HEK293T (cell line): ENCODE measurements at regions of chr7 and their contacts with region 1.

Region 1: GRCh38 chr7:129163875-129164544 is 19.5 kb downstream of the TSPAN33 start:
- DNase-seq: peak; percentile 47

Region 2: GRCh38 chr7:129066290-129067131 is 97.5 kb before region 1 on chr7:
- CTCF ChIA-PET with region 1: no interaction called
- POLR2A ChIA-PET with region 1: no interaction called
- DNase-seq: peak; percentile 27

Region 3: DNA sequence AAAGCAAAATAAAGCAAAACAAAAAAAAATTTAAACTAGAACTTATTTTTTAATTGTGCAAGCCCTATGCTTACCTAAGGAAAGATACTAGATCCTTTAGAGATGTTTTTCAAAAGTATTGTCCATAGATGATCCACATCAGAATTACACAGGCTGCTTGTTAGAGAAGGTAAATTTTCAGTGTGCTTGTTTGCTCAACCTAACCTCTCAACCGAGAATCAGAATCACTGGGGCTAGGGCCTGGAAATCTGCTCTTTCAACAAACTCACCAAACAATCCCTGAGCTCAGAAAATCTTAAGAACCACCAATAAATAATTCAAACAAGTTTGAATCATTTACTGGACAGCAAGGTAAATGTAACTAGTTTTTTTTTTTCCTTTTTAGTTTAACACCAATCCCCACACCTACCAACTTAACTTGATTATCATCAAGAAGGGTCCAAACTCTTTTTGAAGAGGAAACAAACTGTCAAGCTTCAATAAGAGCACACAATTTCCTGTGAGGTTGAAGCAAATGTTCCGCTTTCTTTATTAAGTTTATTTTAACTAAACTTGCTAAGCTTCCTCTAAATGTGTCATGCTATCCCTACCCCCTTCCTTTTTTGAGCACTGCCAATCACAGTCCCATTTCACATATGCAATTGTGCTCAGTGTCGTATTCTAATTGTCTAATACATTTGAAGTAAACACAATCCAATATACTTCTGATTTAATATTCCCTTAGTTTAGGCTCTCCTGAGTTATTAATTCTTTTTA is 26.9 kb before region 1 on chr7:
- CTCF ChIA-PET with region 1: interaction called, 10 read pairs
- POLR2A ChIA-PET with region 1: no interaction called
- DNase-seq: no peak

Region 4: DNA sequence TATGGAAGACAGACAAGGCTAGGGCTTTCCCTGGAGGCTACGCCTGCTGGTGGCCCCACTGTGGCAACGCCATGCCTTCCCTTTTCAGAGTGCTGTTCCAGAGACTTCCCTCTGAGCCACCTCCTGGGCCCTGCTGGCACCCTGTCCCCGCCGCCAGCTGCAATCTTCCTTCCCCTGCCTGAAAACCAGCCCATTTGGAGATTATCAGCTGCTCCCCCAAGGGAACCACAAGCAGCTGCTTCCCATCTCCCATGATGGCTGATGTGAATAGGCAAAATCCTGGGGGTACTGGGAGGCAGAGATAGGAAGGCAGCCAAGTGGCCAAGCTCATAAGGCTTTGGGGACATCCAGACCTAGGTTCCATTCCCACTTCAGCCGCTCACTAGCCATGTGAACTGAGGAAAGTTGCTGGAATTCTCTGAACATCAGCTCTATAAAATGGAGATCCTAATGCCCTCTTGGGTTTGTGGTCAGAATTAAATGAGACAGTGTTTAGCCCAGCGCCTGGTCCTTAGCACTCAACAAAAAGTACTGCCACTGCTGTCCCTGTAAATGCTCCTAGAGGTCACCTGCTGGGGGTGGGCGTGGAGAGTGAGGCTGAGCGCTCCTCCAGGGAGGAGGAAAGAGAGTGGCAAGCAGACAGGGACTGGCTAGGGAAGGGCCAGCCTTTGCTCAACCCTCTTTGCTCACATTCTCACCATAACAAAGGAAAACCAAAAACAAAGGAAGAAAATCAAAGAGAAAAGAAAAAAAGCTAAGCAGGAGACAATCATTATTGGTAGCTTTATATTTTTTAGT is 13.6 kb before region 1 on chr7:
- CTCF ChIA-PET with region 1: interaction called, 11 read pairs
- POLR2A ChIA-PET with region 1: no interaction called
- DNase-seq: no peak

Region 5: DNA sequence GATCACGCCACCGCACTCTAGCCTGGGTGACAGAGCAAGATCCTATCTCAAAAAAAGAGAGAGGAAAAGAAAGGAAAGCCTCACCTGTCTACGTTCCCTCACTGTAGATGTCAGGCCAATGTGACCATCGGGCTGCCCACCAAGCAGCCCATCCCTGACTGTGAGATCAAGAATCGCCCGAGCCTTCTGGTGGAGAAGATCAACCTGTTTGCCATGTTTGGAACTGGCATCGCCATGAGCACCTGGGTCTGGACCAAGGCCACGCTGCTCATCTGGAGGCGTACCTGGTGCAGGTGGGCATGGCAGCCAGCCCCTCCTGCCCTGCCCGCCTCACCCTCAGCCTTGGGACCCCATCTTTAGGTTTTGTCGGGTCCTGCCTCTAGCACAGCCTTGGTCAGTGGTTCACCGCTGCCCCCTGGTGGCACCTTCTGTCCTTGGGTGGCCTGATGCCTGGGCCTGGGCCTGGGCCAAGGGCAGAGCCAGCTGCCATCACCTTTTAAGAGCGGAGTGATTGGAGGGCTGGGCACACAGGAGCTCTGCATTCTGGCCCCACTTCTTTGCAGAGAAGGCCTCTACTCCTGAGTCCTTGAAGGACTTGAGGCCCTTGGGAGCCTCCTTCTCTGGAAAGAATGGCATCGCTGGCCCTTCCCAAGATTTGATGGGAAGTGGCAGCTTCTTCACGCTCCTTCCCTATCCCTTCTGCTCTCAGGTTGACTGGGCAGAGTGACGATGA is 46.4 kb after region 1 on chr7:
- CTCF ChIA-PET with region 1: interaction called, 34 read pairs
- POLR2A ChIA-PET with region 1: no interaction called
- DNase-seq: peak; percentile 71